ENCODE measurements at regions of chr14 and their contacts with region 1.

Region 1: DNA sequence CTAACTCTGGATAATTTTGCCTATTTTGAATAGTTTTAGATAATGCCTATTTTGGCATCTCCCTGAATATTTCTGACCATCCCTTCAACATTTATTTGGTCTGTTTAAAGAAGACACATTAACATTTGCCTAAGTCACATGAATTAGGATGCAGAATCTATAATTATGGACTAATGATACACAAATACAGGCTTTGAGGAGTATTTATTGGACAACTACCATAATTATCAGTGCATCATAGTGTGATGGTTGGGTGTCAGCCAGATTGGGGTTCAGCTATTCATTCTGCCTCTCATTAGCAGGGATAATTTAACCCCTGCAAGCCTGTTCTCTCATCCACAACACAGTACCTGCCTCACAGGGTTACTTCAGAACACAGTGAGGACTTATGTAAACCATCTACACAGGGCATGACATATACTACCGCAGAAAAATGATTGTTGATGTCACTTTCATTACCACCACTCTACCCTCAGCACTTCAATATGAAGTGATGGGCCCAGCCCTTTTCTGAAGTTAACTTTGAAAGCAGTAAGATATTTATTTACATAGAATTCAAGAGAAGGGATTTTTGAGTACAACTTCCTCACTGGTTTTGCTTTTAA is 14.4 kb downstream of the PRKCH start:
- DNase-seq: peak; percentile 65 to 78 (median 73)
- H3K4me3 ChIP-seq: peak overlapping the region; percentile 2 to 25
- H3K4me3 Mint-ChIP-seq: peak overlapping the region; percentile 78 to 87 (median 84)
- H3K27ac ChIP-seq: peak overlapping the region; percentile 84
- H3K27ac Mint-ChIP-seq: peak overlapping the region; percentile 93 to 100 (median 99)
- H3K4me1 ChIP-seq: peaks cover 94% of the 10 kb centered on the region
- H3K4me1 Mint-ChIP-seq: peaks cover 70 to 85% (median 78%) of the 10 kb centered on the region in 4 donors
- H3K27me3 ChIP-seq: no peaks in the 10 kb centered on the region
- H3K27me3 Mint-ChIP-seq: no peaks in the 10 kb centered on the region

Region 2: DNA sequence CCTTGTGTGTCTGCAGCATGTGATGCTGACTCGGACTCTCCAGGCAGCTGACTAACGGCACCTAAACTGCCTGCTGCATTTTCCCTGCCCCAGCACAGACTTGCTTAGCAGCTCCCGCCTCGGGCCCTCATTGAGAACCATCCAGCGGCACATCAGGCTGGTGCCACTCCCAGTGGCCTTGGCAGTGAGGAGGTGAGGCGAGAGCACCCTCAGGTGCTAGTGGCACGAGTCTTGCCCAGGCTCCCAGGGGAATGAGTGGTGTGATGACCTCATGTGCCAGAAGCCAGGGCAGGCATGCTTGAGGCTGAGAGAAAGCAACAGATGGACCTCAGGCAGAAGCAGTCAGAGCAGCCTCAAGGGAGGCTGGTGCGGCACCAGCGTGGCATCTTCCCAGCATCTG is 45.8 kb after region 1 on chr14:
- CTCF ChIA-PET with region 1: interaction called, 5 read pairs
- POLR2A ChIA-PET with region 1: interaction called, 133 read pairs
- intact Hi-C with region 1: no loop called
- DNase-seq: no peak
- H3K4me3 ChIP-seq: no peak overlapping the region
- H3K4me3 Mint-ChIP-seq: peak overlapping the region in 7 of 8 donors; percentile 23 to 87 (median 68)
- H3K27ac ChIP-seq: peak overlapping the region; percentile 27
- H3K27ac Mint-ChIP-seq: peak overlapping the region in 5 of 7 donors; percentile 77 to 93 (median 88)
- H3K4me1 ChIP-seq: peaks cover 100% of the 10 kb centered on the region
- H3K4me1 Mint-ChIP-seq: peaks cover 0 to 66% (median 29%) of the 10 kb centered on the region in 4 donors
- H3K27me3 ChIP-seq: no peaks in the 10 kb centered on the region
- H3K27me3 Mint-ChIP-seq: no peaks in the 10 kb centered on the region

Measured in CD4-positive, alpha-beta memory T cell (primary cell).